GM12878 (cell line): ENCODE measurements at regions of chr19 and their contacts with region 1.

Region 1: GRCh38 chr19:14015524-14016035 is 9.5 kb upstream of the RFX1 start:
- DNase-seq: peak; percentile 94
- ATAC-seq: peak; percentile 90
- H3K4me3 ChIP-seq: no peak overlapping the region
- H3K27ac ChIP-seq: peak overlapping the region; percentile 83
- H3K4me1 ChIP-seq: peaks cover 27% of the 10 kb centered on the region
- H3K27me3 ChIP-seq: no peaks in the 10 kb centered on the region
- CTCF ChIP-seq: no peak
- EP300 ChIP-seq: peak in 1 of 2 experiments; percentile 56; a peak in 1 of 4 replicates
- POLR2A ChIP-seq: no peak
- RAD21 ChIP-seq: no peak

Region 2: DNA sequence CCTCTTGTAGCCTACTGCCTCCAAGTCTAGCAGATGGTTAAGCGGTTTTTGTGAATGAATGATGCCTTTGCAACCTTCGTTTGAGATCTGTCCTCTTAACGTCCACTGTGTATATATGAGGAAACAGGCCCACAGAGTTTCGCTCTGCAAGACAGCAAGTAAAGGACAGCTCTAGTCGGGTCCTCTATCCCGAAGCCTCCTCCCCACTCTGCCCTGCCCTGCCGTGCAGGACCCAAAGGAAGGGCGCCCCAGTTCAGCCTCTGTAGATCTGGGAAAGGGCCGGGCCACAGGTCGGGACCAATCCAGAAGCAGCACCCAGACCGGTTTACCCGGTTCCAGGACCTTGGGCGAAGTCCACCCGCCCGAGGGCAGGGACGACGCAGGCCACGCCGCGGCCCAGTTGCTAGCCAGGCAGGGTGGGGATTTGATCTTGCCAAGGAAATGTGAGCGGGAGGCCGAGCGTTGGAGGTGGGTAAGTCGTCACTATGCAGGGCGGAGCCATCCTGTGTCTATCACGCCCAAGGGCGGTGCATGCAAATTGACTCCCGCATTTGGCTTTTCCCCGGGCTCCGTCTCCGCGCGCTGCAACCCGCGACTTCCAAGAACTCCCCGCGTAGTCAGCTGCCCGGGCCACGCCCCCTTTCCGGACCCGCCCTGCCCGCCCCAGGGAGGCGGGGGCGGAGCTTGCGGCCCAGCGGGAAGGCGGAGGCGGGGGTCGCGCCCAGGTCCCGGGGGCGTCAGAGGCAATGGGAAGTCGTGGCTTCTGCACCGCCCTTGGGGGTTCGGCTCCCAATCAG is 852.9 kb before region 1 on chr19:
- CTCF ChIA-PET with region 1: interaction called, 3 read pairs
- POLR2A ChIA-PET with region 1: no interaction called
- RAD21 ChIA-PET with region 1: no interaction called
- SMC1A ChIA-PET with region 1: no interaction called
- in situ Hi-C with region 1: loop called (anchors 10 kb)
- intact Hi-C with region 1: no loop called
- DNase-seq: peak; percentile 80
- ATAC-seq: peak; percentile 74
- H3K4me3 ChIP-seq: peak overlapping the region; percentile 74
- H3K27ac ChIP-seq: peak overlapping the region; percentile 85
- H3K4me1 ChIP-seq: peaks cover 54% of the 10 kb centered on the region
- H3K27me3 ChIP-seq: no peaks in the 10 kb centered on the region
- CTCF ChIP-seq: no peak
- EP300 ChIP-seq: no peak
- POLR2A ChIP-seq: peak; percentile 81
- RAD21 ChIP-seq: no peak

Region 3: GRCh38 chr19:13899393-13899792 is 116.2 kb before region 1 on chr19:
- CTCF ChIA-PET with region 1: no interaction called
- POLR2A ChIA-PET with region 1: no interaction called
- RAD21 ChIA-PET with region 1: no interaction called
- SMC1A ChIA-PET with region 1: no interaction called
- in situ Hi-C with region 1: no loop called
- intact Hi-C with region 1: no loop called
- DNase-seq: no peak
- ATAC-seq: no peak
- H3K4me3 ChIP-seq: no peak overlapping the region
- H3K27ac ChIP-seq: no peak overlapping the region
- H3K4me1 ChIP-seq: no peaks in the 10 kb centered on the region
- H3K27me3 ChIP-seq: no peaks in the 10 kb centered on the region
- CTCF ChIP-seq: no peak
- EP300 ChIP-seq: no peak
- POLR2A ChIP-seq: no peak
- RAD21 ChIP-seq: no peak

Region 4: GRCh38 chr19:13986348-13986904 is 29.2 kb before region 1 on chr19:
- CTCF ChIA-PET with region 1: interaction called, 13 read pairs
- POLR2A ChIA-PET with region 1: interaction called, 8 read pairs
- RAD21 ChIA-PET with region 1: interaction called, 3 read pairs
- SMC1A ChIA-PET with region 1: interaction called, 9 read pairs
- in situ Hi-C with region 1: no loop called
- intact Hi-C with region 1: no loop called
- DNase-seq: peak; percentile 93
- ATAC-seq: peak; percentile 97
- H3K4me3 ChIP-seq: peak overlapping the region; percentile 49; the same call in 1 of the 2 replicates
- H3K27ac ChIP-seq: peak overlapping the region; percentile 94
- H3K4me1 ChIP-seq: peaks cover 27% of the 10 kb centered on the region
- H3K27me3 ChIP-seq: no peaks in the 10 kb centered on the region
- CTCF ChIP-seq: no peak
- EP300 ChIP-seq: 0 out of 4 replicates have a peak, but pooled peaks have one; percentile 27 to 47
- POLR2A ChIP-seq: peak; percentile 86
- RAD21 ChIP-seq: peak; percentile 14; the same call in 1 of the 2 replicates